ENCODE measurements at regions of chr4 and their contacts with region 1.

Region 1: DNA sequence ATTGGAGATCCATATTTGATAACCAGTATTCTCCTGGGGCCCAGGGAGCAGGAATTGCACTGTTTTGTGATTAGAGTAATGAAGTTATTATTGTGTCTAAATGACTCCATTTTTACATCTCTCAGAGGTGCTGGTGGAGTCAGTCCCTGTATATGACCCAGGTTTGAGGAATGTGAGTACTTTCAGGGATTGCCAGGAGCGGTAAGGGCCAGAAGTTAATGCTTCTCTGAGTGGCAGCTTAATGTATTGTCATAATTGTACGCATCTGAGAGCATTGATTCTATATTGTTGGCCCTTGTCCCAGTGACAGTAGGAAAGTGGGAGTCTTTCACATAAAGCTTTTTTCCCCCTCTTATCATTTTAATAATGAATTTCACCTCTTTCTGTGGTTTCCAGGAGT is 146.2 kb downstream of the GATB start:
- DNase-seq: no peak
- H3K4me3 Mint-ChIP-seq: no peak overlapping the region
- H3K27ac Mint-ChIP-seq: no peak overlapping the region
- H3K4me1 Mint-ChIP-seq: no peaks in the 10 kb centered on the region
- H3K27me3 Mint-ChIP-seq: peaks cover 18% of the 10 kb centered on the region

Region 2: GRCh38 chr4:151276787-151277562 is 337.6 kb before region 1 on chr4 and contains the start of gene PRSS48:
- intact Hi-C with region 1: loop called (anchors 10 kb)
- DNase-seq: peak; percentile 82
- H3K4me3 Mint-ChIP-seq: no peak within 1 kb of the TSS
- H3K27ac Mint-ChIP-seq: no peak within 1 kb of the TSS
- H3K4me1 Mint-ChIP-seq: no peaks in the 10 kb centered on the region
- H3K27me3 Mint-ChIP-seq: peaks cover 9% of the 10 kb centered on the region
- total RNA-seq, gene PRSS48: not detected in 2 replicates

Region 3: GRCh38 chr4:152436384-152436783 is 821.8 kb after region 1 on chr4:
- intact Hi-C with region 1: no loop called
- DNase-seq: no peak
- H3K4me3 Mint-ChIP-seq: no peak overlapping the region
- H3K27ac Mint-ChIP-seq: no peak overlapping the region
- H3K4me1 Mint-ChIP-seq: peaks cover 19% of the 10 kb centered on the region
- H3K27me3 Mint-ChIP-seq: no peaks in the 10 kb centered on the region

Measured in activated CD4-positive, alpha-beta T cell treated with anti-CD3 and anti-CD28 coated beads, Interleukin-2, amount 10 ng/mL, durations not matched to agents 24 days and 14 days (primary cell).